ENCODE measurements at regions of chr5 and their contacts with region 1.

Region 1: DNA sequence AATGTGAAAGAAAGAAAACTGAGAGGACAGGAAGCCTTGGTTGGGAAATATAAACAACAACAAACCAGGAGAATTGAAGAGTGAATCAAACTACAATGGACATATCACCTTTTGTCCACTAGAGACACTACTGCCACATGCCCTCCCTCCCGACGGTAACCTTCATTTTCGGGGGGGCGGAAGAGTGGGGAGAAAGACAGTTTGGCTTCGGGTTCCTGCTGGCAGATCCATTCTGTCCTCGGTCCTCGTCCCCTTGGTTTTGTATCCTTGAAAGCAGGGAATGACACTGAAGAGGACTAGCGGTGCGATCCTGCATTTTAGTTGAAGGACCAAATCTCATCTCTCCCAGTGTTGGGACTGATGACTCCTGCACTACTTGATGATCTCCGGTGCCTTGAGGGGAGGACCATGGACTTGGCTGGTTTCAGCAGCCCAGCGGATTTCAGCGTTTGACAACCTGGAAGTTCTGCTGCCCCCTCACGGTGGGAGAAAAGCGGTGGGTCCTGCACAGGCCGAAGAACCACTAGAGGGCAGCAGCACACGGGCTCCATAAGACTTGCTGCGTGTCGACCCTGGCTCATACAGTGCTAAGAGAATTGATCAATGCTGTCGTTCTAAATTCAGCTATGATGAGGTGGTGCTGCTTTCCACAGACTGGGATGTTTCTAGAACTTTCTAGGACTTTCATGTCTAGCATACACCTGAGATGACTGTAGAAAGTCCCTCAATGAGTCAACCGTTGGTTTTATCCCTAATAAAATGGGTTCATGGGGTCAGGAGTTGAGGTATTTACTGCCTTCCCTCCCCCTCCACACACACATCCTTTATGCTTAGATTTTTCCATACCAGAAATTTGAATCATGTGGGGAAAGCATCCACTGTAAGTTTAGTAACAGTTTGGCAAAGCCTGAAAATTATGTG is 15.1 kb upstream of the ZNF131 start:
- DNase-seq: peak; percentile 98 to 99 (median 99)
- H3K4me3 ChIP-seq: peak overlapping the region; percentile 35 to 85 (median 66)
- H3K27ac ChIP-seq: peak overlapping the region in 1 of 2 experiments; percentile 55
- H3K4me1 ChIP-seq: peaks cover 0 to 10% (median 5%) of the 10 kb centered on the region in 4 experiments
- H3K27me3 ChIP-seq: no peaks in the 10 kb centered on the region

Region 2: DNA sequence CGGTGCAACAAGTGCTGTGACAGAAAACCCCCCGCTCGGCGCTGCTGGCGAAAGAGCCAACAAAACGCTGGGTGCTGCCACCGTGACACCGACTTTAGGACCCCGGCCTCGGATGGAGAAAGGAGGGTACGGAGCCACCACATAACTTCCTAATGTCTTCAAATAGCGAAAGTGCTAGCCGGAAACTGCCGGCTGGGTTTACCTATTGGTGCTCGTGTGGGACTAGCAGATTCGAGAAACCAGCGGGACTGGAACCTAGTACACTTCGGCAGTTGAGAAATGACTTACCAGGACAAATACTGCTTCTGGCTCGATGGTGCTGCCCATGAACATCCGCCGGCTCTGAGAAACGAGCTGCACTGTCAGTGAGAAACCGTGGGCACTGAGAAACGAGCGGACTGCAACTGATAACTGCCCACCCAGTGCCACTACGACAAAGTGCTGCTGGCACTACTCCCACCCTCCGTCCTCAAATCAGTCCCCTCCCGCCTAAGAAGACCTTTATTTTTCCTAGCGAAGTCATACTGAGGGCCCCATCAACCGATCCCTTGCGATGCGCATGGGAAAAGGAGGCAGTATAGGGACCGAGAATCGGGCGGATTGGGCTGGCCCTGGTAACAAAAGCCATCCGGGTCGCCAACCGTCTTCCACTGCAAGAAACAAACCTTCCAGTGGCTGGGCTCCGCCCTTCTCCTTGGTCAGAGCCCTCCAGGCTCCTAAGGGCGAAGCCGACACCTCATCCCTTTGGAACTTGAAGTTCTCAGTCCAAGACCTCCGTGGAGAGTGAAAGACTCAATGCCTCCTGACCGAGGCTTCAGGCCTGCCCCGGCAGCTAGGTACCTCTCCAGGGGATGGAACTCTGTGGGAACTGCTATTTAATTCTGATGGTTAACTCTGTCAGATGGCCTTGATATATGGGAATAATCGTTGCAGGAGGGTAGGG is 38.6 kb before region 1 on chr5:
- CTCF ChIA-PET with region 1: interaction called, 10 read pairs
- POLR2A ChIA-PET with region 1: interaction called, 3 read pairs
- DNase-seq: peak; percentile 94 to 97 (median 95)
- H3K4me3 ChIP-seq: peak overlapping the region; percentile 85 to 99 (median 94)
- H3K27ac ChIP-seq: peak overlapping the region; percentile 98 to 99
- H3K4me1 ChIP-seq: peaks cover 12 to 41% (median 32%) of the 10 kb centered on the region in 4 experiments
- H3K27me3 ChIP-seq: no peaks in the 10 kb centered on the region

Region 3: DNA sequence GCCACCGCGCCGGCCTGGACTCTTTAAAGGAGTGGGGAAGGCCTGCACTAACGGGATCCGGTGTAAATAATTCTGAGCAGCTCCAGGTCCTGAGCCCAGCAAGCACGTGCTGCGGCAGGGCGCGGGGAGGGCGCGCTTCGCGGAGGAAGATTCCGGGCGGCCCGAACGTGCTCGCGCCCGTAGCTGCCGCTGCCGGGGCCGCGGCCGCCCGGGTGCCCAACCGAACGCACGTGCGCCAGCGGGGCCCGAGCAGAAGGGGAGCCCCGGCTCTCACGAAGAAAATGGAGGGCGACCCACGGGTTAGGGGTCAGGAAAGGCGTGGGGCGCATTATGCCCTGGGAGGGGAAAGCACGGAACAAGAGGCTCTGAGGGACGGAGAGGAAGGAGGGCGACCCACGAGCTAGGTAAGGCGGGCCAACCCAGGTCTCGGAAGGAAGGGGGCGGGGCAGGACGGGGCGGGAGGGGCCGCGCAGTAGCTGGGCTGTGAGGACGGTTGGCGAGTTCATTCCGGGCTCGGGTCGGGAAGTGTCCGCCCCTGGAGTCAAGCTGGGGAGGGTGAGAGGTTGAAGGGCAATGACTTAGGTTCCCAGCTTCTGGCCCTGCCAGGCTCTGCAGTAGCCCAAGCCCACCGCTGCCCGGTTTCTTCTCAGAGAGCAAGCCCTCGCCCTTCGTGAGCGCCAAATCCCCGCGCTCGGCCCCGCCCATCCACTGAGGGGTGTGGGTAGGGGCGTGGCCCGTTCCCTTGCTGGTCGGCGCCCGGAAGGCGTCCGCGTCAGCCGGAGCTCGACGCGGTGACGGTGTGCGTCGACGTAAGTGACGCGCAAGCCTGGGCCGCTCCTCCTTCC is 15.3 kb after region 1 on chr5 and contains the start of gene ZNF131:
- CTCF ChIA-PET with region 1: interaction called, 127 read pairs
- POLR2A ChIA-PET with region 1: interaction called, 8 read pairs
- DNase-seq: peak; percentile 98 to 99 (median 99)
- H3K4me3 ChIP-seq: peak within 1 kb of the TSS; percentile 76 to 98 (median 92)
- H3K27ac ChIP-seq: peak within 1 kb of the TSS; percentile 94 to 98
- H3K4me1 ChIP-seq: peaks cover 8 to 34% (median 22%) of the 10 kb centered on the region in 4 experiments
- H3K27me3 ChIP-seq: no peaks in the 10 kb centered on the region

Region 4: GRCh38 chr5:43981556-43981955 is 875.9 kb after region 1 on chr5:
- CTCF ChIA-PET with region 1: no interaction called
- POLR2A ChIA-PET with region 1: no interaction called
- DNase-seq: no peak
- H3K4me3 ChIP-seq: no peak overlapping the region
- H3K27ac ChIP-seq: no peak overlapping the region
- H3K4me1 ChIP-seq: no peaks in the 10 kb centered on the region
- H3K27me3 ChIP-seq: no peaks in the 10 kb centered on the region

Measured in common myeloid progenitor, CD34-positive (primary cell).